Heart left ventricle (tissue), 16 donors: ENCODE measurements at regions of chr10 and their contacts with region 1.

Region 1: DNA sequence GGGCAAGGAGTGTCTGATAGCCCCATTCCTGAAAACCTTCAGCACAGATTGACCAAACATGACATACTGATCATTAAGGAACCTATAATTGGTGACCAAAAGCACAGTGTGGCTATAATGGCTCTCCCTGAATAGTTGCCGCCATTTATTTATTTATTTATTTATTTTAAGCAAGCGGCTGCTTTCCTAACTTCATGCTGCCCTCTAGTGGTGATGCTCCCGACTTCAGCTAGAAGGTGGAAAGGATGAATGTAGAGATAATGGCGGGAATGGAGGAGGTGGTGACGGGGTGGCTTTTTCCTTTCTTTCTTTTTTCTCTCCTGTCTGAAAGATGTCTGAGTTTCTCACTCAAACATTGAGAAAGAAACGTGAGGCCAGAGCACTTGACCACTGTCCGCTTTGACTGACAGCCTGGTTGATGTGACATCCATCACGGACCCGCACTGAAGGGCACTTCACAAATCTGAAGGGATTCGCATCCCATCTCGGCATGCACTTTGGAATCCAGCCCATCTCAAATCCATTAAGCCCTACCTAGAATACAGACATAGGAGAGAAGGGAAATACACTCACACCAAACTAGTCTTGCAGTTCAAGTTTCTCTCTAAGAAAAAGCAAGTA is 1090.1 kb downstream of the KCNMA1 start:
- DNase-seq: peak in 4 of 5 donors; percentile 67 to 87 (median 81)
- ATAC-seq: peak; percentile 52 to 86 (median 64)
- H3K4me3 ChIP-seq: no peak overlapping the region
- H3K27ac ChIP-seq: no peak overlapping the region
- H3K4me1 ChIP-seq: peaks cover 0 to 19% (median 1%) of the 10 kb centered on the region in 12 donors
- H3K27me3 ChIP-seq: no peaks in the 10 kb centered on the region
- CTCF ChIP-seq: peak; percentile 77 to 89 (median 85)
- POLR2A ChIP-seq: no peak

Region 2: DNA sequence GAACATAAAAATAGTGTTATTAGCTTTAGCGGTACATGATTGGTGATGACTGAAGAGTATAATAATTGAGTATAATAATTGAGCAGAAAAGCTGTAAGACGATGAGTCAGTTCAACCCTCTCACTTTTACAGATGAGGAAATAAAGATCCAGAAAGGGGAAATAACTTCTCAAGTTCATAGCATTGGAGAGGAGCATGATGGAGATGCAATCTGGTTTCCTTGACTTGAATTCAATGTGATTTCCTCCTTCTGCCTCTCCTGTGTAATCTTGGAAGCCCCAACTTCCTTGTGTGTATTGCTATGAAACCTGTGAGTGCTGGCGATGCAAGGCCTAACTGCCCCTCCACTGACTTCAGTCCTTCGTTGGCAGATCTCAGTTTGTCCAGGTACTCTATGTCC is 850.9 kb before region 1 on chr10:
- intact Hi-C with region 1: loop called in 1 of 10 experiments (anchors 5 kb)
- DNase-seq: no peak
- ATAC-seq: peak in 1 of 4 donors; percentile 38
- H3K4me3 ChIP-seq: no peak overlapping the region
- H3K27ac ChIP-seq: no peak overlapping the region
- H3K4me1 ChIP-seq: peaks cover 0 to 8% (median 0%) of the 10 kb centered on the region in 12 donors
- H3K27me3 ChIP-seq: no peaks in the 10 kb centered on the region
- CTCF ChIP-seq: no peak
- POLR2A ChIP-seq: no peak

Region 3: GRCh38 chr10:76036111-76036940 is 511.1 kb before region 1 on chr10:
- intact Hi-C with region 1: loop called in 7 of 10 experiments (anchors 5 to 10 kb)
- DNase-seq: peak; percentile 72 to 86 (median 74)
- ATAC-seq: peak; percentile 79 to 94 (median 90)
- H3K4me3 ChIP-seq: peak overlapping the region in 6 of 12 donors; percentile 25 to 49 (median 38)
- H3K27ac ChIP-seq: peak overlapping the region in 1 of 12 donors; percentile 14
- H3K4me1 ChIP-seq: peaks cover 0 to 19% (median 7%) of the 10 kb centered on the region in 12 donors
- H3K27me3 ChIP-seq: no peaks in the 10 kb centered on the region
- CTCF ChIP-seq: peak; percentile 86 to 97 (median 94)
- POLR2A ChIP-seq: no peak

Region 4: GRCh38 chr10:76303682-76304316 is 243.7 kb before region 1 on chr10:
- intact Hi-C with region 1: loop called in 7 of 10 experiments (anchors 5 to 10 kb)
- DNase-seq: peak; percentile 64 to 85 (median 74)
- ATAC-seq: peak; percentile 95 to 99 (median 98)
- H3K4me3 ChIP-seq: no peak overlapping the region
- H3K27ac ChIP-seq: peak overlapping the region in 3 of 12 donors; percentile 25 to 62 (median 58)
- H3K4me1 ChIP-seq: peaks cover 0 to 30% (median 15%) of the 10 kb centered on the region in 12 donors
- H3K27me3 ChIP-seq: no peaks in the 10 kb centered on the region
- CTCF ChIP-seq: peak; percentile 41 to 75 (median 61)
- POLR2A ChIP-seq: no peak

Region 5: GRCh38 chr10:76432274-76433012 is 115.0 kb before region 1 on chr10:
- intact Hi-C with region 1: loop called in 3 of 10 experiments (anchors 2 to 10 kb)
- DNase-seq: peak in 4 of 5 donors; percentile 26 to 63 (median 48)
- ATAC-seq: peak; percentile 22 to 49 (median 38)
- H3K4me3 ChIP-seq: no peak overlapping the region
- H3K27ac ChIP-seq: peak overlapping the region; percentile 68 to 91 (median 80)
- H3K4me1 ChIP-seq: peaks cover 0 to 82% (median 62%) of the 10 kb centered on the region in 12 donors
- H3K27me3 ChIP-seq: no peaks in the 10 kb centered on the region
- CTCF ChIP-seq: no peak
- POLR2A ChIP-seq: no peak

Region 6: GRCh38 chr10:76984559-76985443 is 437.3 kb after region 1 on chr10:
- intact Hi-C with region 1: loop called in 9 of 10 experiments (anchors 5 to 10 kb)
- DNase-seq: peak; percentile 57 to 76 (median 65)
- ATAC-seq: peak in 3 of 4 donors; percentile 72 to 89 (median 80)
- H3K4me3 ChIP-seq: no peak overlapping the region
- H3K27ac ChIP-seq: no peak overlapping the region
- H3K4me1 ChIP-seq: no peaks in the 10 kb centered on the region
- H3K27me3 ChIP-seq: no peaks in the 10 kb centered on the region
- CTCF ChIP-seq: peak; percentile 80 to 97 (median 92)
- POLR2A ChIP-seq: no peak